Transverse colon (tissue), 4 donors: ENCODE measurements at regions of chr12 and their contacts with region 1.

Region 1: GRCh38 chr12:26832822-26833742 is at the start of gene ITPR2:
- DNase-seq: peak; percentile 97
- H3K4me3 ChIP-seq: peak within 1 kb of the TSS; percentile 55 to 98 (median 80)
- H3K27ac ChIP-seq: peak within 1 kb of the TSS; percentile 90 to 99 (median 96)
- H3K4me1 ChIP-seq: peaks cover 0 to 37% (median 9%) of the 10 kb centered on the region in 4 donors
- H3K27me3 ChIP-seq: no peaks in the 10 kb centered on the region
- CTCF ChIP-seq: peak in 1 of 5 experiments; percentile 21
- EP300 ChIP-seq: no peak
- POLR2A ChIP-seq: peak; percentile 83
- total RNA-seq, gene ITPR2: 29.8 to 60.5 (median 41.2) TPM

Region 2: DNA sequence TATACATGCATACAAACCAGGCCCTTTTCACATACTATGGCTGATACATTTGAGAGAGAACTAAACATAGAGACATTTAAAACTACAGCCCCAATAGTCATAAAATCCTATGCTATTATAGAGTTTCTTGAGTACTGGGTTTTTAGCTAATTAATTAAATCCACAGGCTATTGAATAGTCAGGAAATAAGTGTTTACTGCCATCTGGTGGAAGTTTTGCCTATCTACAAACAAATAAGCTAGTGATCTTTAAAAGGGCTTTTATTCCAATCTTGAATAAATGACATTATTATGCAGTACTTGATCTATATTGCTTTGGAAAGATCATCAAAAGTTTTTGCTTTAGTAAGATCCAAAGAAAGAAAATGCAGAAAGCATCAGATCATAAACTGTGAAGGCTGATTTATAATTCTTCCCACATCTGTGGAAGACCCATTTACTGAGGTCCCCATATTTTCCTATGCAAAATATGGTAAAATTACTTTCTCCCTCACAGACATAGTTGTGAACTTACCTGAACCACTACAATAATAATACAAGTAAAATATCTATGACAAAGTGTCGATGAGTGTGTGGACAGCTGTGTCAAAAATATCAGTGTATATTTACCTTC is 131.4 kb before region 1 on chr12:
- in situ Hi-C with region 1: no loop called
- intact Hi-C with region 1: loop called (anchors 10 kb)
- DNase-seq: no peak
- H3K4me3 ChIP-seq: no peak overlapping the region
- H3K27ac ChIP-seq: no peak overlapping the region
- H3K4me1 ChIP-seq: peaks cover 4 to 16% (median 13%) of the 10 kb centered on the region in 4 donors
- H3K27me3 ChIP-seq: no peaks in the 10 kb centered on the region
- CTCF ChIP-seq: peak; percentile 28 to 54 (median 44)
- EP300 ChIP-seq: no peak
- POLR2A ChIP-seq: no peak

Region 3: GRCh38 chr12:27207615-27208413 is 374.7 kb after region 1 on chr12:
- in situ Hi-C with region 1: no loop called
- intact Hi-C with region 1: no loop called
- DNase-seq: no peak
- H3K4me3 ChIP-seq: no peak overlapping the region
- H3K27ac ChIP-seq: no peak overlapping the region
- H3K4me1 ChIP-seq: no peaks in the 10 kb centered on the region
- H3K27me3 ChIP-seq: no peaks in the 10 kb centered on the region
- CTCF ChIP-seq: no peak
- EP300 ChIP-seq: no peak
- POLR2A ChIP-seq: no peak